Body of pancreas (tissue), 4 donors: ENCODE measurements at regions of chr16 and their contacts with region 1.

Region 1: DNA sequence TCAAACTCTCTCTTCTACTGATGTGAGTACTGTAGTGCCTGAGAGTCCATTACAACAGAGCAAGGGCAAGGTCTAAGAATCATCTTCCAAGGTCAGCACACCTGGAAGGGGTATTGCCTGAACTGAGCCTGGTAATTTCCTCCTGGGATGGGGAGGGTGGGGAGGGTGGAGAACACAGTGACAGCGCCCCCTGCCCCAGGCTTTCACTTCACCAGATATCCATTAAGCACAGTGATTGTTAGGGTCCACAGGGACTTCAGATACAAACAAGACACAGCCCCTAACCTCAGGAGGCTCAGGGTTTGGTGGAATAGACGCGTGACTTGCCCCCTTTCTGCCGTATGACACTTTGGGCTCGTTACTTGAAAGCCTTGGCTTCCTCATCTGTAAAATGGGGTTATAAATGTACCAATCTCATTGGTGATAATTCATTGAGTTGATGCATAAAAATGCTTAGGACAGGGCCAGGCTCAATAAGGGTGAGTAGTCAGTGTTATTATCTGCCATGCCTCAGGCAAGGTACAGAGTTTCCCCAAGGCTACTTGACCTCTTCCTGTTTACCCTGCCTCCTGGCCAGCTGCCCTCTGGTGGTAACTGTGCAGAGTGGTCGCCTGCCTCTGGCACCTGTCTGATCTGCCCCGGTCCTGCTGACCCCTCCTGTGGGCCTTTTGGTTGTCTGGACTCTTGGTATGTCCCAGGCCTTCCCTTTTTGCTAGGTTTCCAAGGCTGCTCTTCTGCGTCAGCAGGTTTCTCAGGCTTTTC is 13.1 kb upstream of the BRD7 start:
- DNase-seq: peak in 1 of 4 donors; percentile 19
- ATAC-seq: no peak
- H3K4me3 ChIP-seq: no peak overlapping the region
- H3K27ac ChIP-seq: no peak overlapping the region
- H3K4me1 ChIP-seq: no peaks in the 10 kb centered on the region
- H3K27me3 ChIP-seq: no peaks in the 10 kb centered on the region
- CTCF ChIP-seq: no peak
- POLR2A ChIP-seq: no peak

Region 2: DNA sequence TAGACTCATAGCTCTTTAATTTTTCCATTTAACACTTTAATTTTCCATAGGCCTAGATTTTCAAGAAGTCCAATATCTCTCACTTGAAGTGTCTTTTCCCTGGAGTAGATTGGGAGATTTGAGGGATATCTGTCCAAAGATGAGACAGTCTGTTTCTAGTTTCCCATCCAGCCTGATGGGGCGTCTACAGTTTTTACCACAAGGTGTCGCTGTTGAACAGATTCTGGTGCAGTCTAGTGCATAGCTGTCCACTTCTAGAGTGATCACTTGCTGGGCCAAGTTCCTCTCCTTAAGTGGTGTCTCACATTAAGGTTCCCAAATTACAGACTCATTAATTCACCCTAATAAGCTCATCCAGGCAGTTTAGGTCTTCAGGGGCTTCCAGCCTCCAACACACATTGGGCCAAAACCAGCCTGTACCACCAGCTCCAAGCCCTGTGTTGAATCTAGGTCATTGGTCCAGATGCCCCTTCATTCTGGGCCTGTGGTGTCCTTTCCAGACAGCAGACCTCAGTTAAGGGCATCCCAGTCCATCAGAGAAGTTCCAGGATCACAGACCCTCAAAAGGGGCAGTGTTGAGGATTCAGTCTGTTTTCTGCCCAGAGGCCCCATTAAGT is 289.9 kb after region 1 on chr16:
- intact Hi-C with region 1: loop called (anchors 10 kb)
- DNase-seq: no peak
- ATAC-seq: no peak
- H3K4me3 ChIP-seq: no peak overlapping the region
- H3K27ac ChIP-seq: no peak overlapping the region
- H3K4me1 ChIP-seq: peaks cover 4% of the 10 kb centered on the region
- H3K27me3 ChIP-seq: peaks cover 0 to 9% of the 10 kb centered on the region in 2 donors
- CTCF ChIP-seq: peak in 4 of 7 experiments; percentile 12 to 32 (median 20)
- POLR2A ChIP-seq: no peak